CD8-positive, alpha-beta memory T cell (primary cell): ENCODE measurements at regions of chr4 and their contacts with region 1.

Region 1: DNA sequence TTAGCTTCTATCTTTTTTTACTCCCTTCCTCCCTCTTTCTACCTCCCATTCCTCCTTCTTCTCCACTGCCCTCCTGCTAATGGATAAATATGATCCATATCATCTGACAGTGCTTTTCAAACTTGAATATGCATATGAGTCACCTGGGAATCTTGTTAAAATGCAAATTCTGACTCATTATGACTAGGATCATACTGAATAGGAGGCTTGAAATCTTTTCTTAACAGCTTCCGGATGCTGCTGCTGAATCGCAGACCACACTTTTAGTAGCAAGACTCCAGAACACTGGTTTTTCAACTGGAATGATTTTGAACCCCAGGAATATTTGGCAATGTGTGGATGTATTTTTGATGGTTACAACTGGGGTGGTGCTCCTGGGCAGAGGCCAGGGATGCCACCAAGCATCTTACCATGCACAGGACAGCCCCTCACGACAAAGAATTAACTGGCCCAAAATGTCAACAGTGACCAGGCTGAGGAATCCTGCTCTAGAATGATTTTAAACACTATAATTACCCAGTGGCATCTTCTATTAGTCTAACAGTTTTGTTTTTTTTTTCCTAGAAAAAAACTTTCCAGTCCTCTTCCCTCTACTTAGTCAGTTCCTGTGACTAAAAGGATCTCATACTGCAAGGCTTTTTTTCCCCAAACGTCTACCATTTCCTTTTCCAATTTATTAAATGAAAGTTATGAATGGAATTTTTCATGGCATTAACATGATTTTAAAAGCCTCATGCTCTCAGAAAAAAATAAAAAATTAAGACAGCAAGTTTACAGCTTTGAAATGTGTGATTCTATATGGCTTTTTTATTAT is 10.6 kb upstream of the PYURF start:
- DNase-seq: no peak
- H3K4me3 ChIP-seq: no peak overlapping the region
- H3K4me3 Mint-ChIP-seq: no peak overlapping the region
- H3K27ac ChIP-seq: no peak overlapping the region
- H3K27ac Mint-ChIP-seq: no peak overlapping the region
- H3K4me1 ChIP-seq: no peaks in the 10 kb centered on the region
- H3K4me1 Mint-ChIP-seq: peaks cover 0 to 2% (median 0%) of the 10 kb centered on the region in 3 donors
- H3K27me3 ChIP-seq: no peaks in the 10 kb centered on the region
- H3K27me3 Mint-ChIP-seq: no peaks in the 10 kb centered on the region

Region 2: GRCh38 chr4:88523325-88524129 is 10.6 kb before region 1 on chr4 and contains the start of gene PYURF:
- CTCF ChIA-PET with region 1: interaction called, 24 read pairs
- POLR2A ChIA-PET with region 1: no interaction called
- DNase-seq: peak; percentile 66 to 80 (median 69)
- H3K4me3 ChIP-seq: peak within 1 kb of the TSS; percentile 73
- H3K4me3 Mint-ChIP-seq: peak within 1 kb of the TSS; percentile 91 to 99 (median 94)
- H3K27ac ChIP-seq: peak within 1 kb of the TSS; percentile 77
- H3K27ac Mint-ChIP-seq: peak within 1 kb of the TSS; percentile 88 to 98 (median 93)
- H3K4me1 ChIP-seq: peaks cover 23% of the 10 kb centered on the region
- H3K4me1 Mint-ChIP-seq: peaks cover 32 to 48% (median 48%) of the 10 kb centered on the region in 3 donors
- H3K27me3 ChIP-seq: no peaks in the 10 kb centered on the region
- H3K27me3 Mint-ChIP-seq: no peaks in the 10 kb centered on the region
- total RNA-seq, gene PYURF: 68.4 to 70.0 TPM

Region 3: DNA sequence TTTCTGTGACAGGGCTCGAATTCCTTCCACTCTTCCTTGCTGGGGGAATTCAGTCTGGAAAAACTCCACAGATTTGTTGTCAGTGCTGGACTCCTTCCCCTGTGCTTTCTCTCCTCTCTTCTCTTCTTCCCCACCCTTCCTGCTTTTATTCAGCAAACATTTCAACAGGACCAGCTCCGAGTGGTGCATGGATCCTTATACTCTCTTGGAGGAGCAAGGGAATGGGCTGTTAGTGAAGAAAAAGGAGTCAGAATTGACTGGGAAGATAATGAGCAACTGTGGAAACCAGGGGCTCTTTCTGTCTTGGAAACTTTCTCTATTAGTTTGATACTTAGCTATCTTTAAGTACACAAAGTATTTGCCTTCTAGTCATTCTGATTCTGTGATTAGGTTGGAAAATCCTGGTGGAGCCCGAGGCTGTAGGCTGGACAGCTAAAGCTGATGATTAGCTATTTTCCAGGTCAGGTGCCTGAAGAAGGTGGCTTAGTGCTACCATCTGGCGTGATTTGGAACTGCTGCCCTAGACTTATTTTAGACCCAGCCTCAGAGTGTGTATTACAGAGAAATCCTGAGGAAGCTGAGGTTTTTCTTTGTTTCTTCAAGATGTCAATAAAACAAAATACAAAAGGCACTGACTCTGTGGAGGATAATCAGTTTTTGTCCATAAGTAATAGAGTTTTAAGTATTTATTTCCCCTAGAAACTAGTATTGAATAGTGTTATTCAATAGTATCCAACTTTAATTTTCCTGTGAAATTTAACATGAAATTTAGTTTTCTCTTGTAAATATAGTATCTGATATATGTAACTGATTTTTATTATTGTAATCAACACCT is 125.1 kb after region 1 on chr4:
- CTCF ChIA-PET with region 1: interaction called, 21 read pairs
- POLR2A ChIA-PET with region 1: no interaction called
- DNase-seq: peak in 2 of 5 donors; percentile 15 to 42
- H3K4me3 ChIP-seq: no peak overlapping the region
- H3K4me3 Mint-ChIP-seq: no peak overlapping the region
- H3K27ac ChIP-seq: no peak overlapping the region
- H3K27ac Mint-ChIP-seq: peak overlapping the region in 6 of 8 donors; percentile 2 to 38 (median 18)
- H3K4me1 ChIP-seq: no peaks in the 10 kb centered on the region
- H3K4me1 Mint-ChIP-seq: peaks cover 2 to 9% (median 5%) of the 10 kb centered on the region in 3 donors
- H3K27me3 ChIP-seq: no peaks in the 10 kb centered on the region
- H3K27me3 Mint-ChIP-seq: no peaks in the 10 kb centered on the region

Region 4: GRCh38 chr4:89024051-89024675 is 490.0 kb after region 1 on chr4:
- CTCF ChIA-PET with region 1: interaction called, 32 read pairs
- POLR2A ChIA-PET with region 1: no interaction called
- DNase-seq: peak; percentile 17 to 69 (median 54)
- H3K4me3 ChIP-seq: no peak overlapping the region
- H3K4me3 Mint-ChIP-seq: no peak overlapping the region
- H3K27ac ChIP-seq: no peak overlapping the region
- H3K27ac Mint-ChIP-seq: no peak overlapping the region
- H3K4me1 ChIP-seq: no peaks in the 10 kb centered on the region
- H3K4me1 Mint-ChIP-seq: no peaks in the 10 kb centered on the region
- H3K27me3 ChIP-seq: no peaks in the 10 kb centered on the region
- H3K27me3 Mint-ChIP-seq: peaks cover 0 to 3% of the 10 kb centered on the region in 2 donors